AG04449 (cell line): ENCODE measurements at regions of chr7 and their contacts with region 1.

Region 1: DNA sequence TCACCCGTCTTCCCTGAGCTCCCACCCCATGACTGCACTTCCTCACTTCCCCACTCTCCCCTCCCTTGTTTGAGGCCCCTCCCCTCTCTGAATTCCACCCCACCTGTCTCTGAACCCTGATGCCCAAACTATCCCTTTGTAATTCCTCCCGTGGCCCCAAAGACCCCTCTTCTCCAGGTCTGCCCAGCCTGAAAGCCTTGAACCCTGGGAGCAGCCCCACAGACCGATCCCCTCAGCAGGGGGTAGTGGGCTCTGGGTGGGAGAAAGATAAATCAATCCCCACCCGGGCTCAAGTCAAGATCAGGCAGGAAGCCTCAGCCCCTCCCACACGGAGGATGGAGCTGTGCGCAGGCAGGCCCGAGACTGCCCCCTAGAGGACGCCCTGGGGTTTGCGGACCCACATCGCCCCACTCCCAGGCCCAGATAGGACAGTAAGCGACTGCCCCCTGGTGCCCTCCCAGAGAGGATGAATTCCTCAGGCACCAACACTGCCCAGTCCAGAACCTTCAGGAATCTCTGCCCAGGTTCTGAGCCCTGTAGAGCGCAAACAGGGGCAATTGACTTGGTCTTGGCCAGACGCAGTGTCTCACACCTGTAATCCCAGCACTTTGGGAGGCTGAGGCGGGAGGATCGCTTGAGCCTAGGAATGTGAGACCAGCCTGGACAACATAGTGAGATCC is 11.7 kb downstream of the HSPB1 start:
- DNase-seq: peak; percentile 67
- H3K4me3 ChIP-seq: no peak overlapping the region
- CTCF ChIP-seq: peak; percentile 100

Region 2: DNA sequence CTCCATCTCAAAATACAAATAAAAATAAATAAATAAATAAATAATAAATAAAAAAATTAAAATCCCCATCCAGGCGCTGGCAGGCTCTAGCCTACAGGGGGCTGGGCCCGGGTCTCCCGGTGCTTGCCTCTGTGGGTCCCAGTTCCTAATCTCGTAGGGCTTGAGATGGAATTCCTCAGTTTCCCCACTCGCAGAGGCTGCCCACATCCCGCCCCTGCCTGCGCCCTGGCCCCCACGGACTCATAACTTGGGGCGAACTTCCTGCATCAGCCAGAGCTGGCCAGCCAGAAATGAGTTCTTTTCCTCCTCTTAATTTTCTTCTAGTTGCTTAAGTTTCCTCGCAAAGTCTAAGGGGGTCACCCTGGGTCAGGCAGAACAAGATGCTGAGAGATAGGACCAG is 134.5 kb before region 1 on chr7:
- CTCF ChIA-PET with region 1: interaction called, 345 read pairs
- POLR2A ChIA-PET with region 1: no interaction called
- DNase-seq: no peak
- H3K4me3 ChIP-seq: no peak overlapping the region
- CTCF ChIP-seq: no peak

Region 3: GRCh38 chr7:76252020-76252419 is 62.2 kb before region 1 on chr7:
- CTCF ChIA-PET with region 1: no interaction called
- POLR2A ChIA-PET with region 1: no interaction called
- DNase-seq: no peak
- H3K4me3 ChIP-seq: no peak overlapping the region
- CTCF ChIP-seq: no peak

Region 4: GRCh38 chr7:76262683-76263402 is 51.3 kb before region 1 on chr7:
- CTCF ChIA-PET with region 1: interaction called, 28 read pairs
- POLR2A ChIA-PET with region 1: interaction called, 4 read pairs
- DNase-seq: no peak
- H3K4me3 ChIP-seq: no peak overlapping the region
- CTCF ChIP-seq: peak; percentile 85

Region 5: GRCh38 chr7:76291343-76292212 is 22.6 kb before region 1 on chr7:
- CTCF ChIA-PET with region 1: interaction called, 164 read pairs
- POLR2A ChIA-PET with region 1: interaction called, 8 read pairs
- DNase-seq: peak; percentile 93
- H3K4me3 ChIP-seq: peak overlapping the region; percentile 36
- CTCF ChIP-seq: peak; percentile 89

Region 6: DNA sequence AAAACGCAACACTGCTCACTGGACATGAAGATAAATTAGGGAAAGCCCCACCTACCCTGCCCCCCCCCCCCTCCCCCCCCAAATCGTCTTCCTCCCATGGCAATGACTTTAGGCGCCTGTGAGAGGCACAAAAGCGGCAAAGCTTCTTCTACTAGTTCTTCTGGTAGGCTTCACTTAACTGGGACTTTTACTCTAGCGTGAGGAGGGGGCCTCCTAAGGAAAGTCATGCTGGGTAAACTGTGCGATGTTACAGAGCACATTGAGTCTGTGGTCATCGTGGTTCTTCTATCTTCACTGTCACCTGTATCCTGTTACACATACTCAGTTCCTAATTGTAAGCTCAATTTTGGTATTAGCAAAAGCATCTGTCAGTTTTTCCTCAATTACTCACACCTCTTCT is 13.4 kb after region 1 on chr7:
- CTCF ChIA-PET with region 1: interaction called, 12 read pairs
- POLR2A ChIA-PET with region 1: interaction called, 3 read pairs
- DNase-seq: no peak
- H3K4me3 ChIP-seq: no peak overlapping the region
- CTCF ChIP-seq: no peak